Activated CD4-positive, alpha-beta T cell treated with anti-CD3 and anti-CD28 coated beads for 36 hours (primary cell): ENCODE measurements at regions of chr5 and their contacts with region 1.

Region 1: GRCh38 chr5:14727428-14727865 is 62.9 kb downstream of the OTULIN start:
- DNase-seq: peak; percentile 87
- ATAC-seq: peak; percentile 51
- H3K4me3 Mint-ChIP-seq: no peak overlapping the region
- H3K27ac Mint-ChIP-seq: no peak overlapping the region
- H3K4me1 Mint-ChIP-seq: peaks cover 15% of the 10 kb centered on the region
- H3K27me3 Mint-ChIP-seq: no peaks in the 10 kb centered on the region

Region 2: DNA sequence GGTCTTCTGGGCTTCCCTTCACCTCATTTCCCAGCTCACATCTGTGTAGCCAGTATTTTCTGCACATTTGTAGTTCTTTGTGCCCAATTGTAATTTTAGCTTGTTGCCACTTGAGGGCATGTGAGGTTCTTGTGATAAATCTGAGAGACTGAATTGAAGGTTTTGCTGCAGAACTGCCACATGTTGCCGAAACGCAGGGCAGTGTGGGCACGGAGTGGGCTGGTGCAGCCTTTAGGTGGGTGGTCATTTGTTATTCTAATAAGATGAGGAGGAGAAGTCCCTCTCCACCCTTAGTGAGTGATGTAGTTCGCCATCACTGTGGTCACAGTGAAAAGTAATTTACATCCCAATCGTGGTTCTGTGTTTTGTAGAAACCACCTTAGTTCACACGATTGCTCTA is 41.7 kb before region 1 on chr5:
- CTCF ChIA-PET with region 1: interaction called, 12 read pairs
- POLR2A ChIA-PET with region 1: no interaction called
- intact Hi-C with region 1: no loop called
- DNase-seq: peak; percentile 64
- ATAC-seq: peak; percentile 87
- H3K4me3 Mint-ChIP-seq: no peak overlapping the region
- H3K27ac Mint-ChIP-seq: no peak overlapping the region
- H3K4me1 Mint-ChIP-seq: peaks cover 10% of the 10 kb centered on the region
- H3K27me3 Mint-ChIP-seq: no peaks in the 10 kb centered on the region

Region 3: DNA sequence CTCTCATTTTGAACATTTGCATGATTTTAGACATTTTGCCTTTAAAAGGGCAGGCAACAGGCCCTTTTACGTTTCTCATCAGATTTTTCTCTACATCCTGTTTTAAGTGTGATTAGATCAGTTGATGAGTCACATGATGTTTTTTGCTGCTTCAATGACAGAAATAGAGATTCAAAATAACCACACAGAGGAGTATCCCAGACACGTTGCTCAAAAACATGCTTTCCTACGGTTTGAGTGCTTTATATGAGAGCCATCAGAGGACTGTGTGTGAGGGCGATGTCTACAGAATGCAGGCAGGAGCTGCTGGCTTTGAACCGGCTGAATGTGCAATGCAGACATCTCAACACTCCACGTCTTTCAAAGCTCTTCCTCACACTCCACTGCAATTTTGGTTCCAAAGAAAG is 20.8 kb before region 1 on chr5:
- CTCF ChIA-PET with region 1: interaction called, 10 read pairs
- POLR2A ChIA-PET with region 1: no interaction called
- intact Hi-C with region 1: loop called in 1 of 2 experiments (anchors 1 kb)
- DNase-seq: peak; percentile 51
- ATAC-seq: peak; percentile 95
- H3K4me3 Mint-ChIP-seq: peak overlapping the region; percentile 48
- H3K27ac Mint-ChIP-seq: peak overlapping the region; percentile 98
- H3K4me1 Mint-ChIP-seq: peaks cover 83% of the 10 kb centered on the region
- H3K27me3 Mint-ChIP-seq: no peaks in the 10 kb centered on the region

Region 4: DNA sequence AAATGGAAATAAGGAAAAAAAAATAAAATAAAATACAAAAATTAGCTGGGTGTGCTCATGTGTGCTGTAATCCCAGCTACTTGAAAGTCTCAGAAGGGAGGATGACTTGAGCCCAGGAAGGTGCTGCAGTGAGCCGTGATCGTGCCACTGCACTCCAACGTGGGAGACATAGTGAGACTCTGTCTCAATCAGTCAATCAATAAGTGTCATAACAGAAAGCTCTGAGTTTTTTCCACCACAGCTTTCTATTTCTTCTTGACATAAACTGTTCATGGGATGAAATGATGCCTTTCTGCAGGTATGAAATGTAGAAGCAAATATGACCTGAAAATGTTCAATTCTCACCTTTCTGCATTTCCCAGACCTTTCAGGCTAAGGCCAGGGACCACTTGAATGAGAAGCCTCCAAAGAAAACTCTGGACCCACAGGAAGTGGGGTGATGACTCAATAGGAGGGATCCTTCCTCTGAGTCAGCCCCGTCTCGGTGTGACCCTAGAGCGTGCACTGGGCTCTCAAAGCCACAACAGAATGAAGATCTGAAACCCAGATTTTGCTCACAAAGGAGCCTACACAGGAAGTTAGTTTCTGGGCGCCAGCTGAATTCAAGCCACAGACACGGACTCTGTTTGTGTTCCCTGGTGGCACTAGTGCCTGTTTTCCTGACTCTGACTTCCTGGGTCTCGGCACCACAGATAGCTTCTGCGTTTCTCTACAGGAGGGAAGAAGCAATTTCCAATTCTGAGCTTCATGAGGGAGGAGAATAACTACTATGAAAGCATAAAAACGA is 82.1 kb after region 1 on chr5:
- CTCF ChIA-PET with region 1: interaction called, 5 read pairs
- POLR2A ChIA-PET with region 1: no interaction called
- intact Hi-C with region 1: loop called (anchors 1 to 5 kb)
- DNase-seq: peak; percentile 87
- ATAC-seq: peak; percentile 96
- H3K4me3 Mint-ChIP-seq: peak overlapping the region; percentile 55
- H3K27ac Mint-ChIP-seq: peak overlapping the region; percentile 71
- H3K4me1 Mint-ChIP-seq: peaks cover 51% of the 10 kb centered on the region
- H3K27me3 Mint-ChIP-seq: no peaks in the 10 kb centered on the region

Region 5: DNA sequence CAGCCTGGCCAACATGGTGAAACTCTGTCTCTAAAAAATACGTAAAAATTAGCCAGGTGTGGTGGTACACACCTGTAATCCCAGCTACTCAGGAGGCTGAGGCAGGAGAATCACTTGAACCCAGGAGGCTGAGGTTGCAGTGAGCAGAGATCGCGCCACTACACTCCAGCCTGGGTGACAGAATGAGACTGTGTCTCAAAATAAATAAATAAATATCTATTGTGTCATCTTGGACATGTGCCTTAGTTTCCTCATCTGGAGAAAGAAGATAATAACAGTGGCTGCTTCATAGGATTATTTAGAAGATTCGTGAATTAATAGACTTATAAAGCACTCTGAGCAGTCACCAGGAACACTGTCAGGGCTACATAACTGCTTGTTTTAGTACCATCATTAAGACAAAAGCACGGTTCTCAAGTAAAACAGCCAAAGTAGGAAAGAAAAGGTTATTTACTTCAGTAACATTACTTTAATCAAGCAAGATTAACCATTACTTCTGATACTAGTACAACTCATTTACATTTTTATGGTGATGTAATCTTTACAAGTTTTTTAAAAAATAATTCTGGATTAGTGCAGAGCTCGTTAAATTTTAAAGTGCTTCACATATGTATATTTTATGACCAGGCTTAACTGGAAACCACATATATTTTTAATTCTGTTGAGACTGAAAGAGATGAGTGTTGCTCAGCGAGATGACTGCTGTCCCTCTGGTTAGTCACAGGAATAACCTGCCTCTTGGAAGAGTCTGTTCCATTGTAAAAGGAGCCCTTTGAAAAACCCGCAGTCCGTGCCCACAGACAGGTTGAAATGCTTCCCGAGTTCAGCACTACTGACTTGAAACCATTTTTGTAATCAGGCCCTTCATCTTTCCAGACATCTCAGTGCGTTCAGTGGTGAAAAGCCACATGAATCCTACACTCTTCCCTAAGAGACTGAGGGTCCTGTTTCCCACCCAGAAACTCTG is 107.4 kb after region 1 on chr5:
- CTCF ChIA-PET with region 1: no interaction called
- POLR2A ChIA-PET with region 1: no interaction called
- intact Hi-C with region 1: no loop called
- DNase-seq: no peak
- ATAC-seq: no peak
- H3K4me3 Mint-ChIP-seq: no peak overlapping the region
- H3K27ac Mint-ChIP-seq: no peak overlapping the region
- H3K4me1 Mint-ChIP-seq: peaks cover 20% of the 10 kb centered on the region
- H3K27me3 Mint-ChIP-seq: no peaks in the 10 kb centered on the region

Region 6: GRCh38 chr5:14946815-14947640 is 219.6 kb after region 1 on chr5:
- CTCF ChIA-PET with region 1: no interaction called
- POLR2A ChIA-PET with region 1: no interaction called
- intact Hi-C with region 1: loop called in 1 of 2 experiments (anchors 5 kb)
- DNase-seq: peak; percentile 40
- ATAC-seq: peak; percentile 95
- H3K4me3 Mint-ChIP-seq: no peak overlapping the region
- H3K27ac Mint-ChIP-seq: no peak overlapping the region
- H3K4me1 Mint-ChIP-seq: peaks cover 19% of the 10 kb centered on the region
- H3K27me3 Mint-ChIP-seq: no peaks in the 10 kb centered on the region

Region 7: DNA sequence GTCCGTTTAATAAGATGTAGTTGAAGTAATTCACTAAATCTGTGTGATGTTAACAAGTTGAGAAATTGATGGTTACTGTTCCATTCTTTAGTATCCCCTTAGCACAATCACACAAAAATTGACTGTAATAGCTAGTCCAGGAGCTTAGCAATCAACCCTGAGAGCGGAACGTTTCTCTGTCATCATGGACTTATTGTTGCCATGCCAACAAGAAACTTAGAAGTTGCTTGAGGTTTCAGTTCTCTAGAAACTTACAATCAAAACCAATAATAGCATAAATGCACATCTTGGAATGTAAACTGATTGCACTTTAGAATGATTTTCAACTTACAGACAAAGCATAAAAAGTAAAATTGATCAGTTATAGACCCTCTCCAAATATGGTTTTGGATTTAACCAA is 269.6 kb after region 1 on chr5:
- CTCF ChIA-PET with region 1: interaction called, 85 read pairs
- POLR2A ChIA-PET with region 1: no interaction called
- intact Hi-C with region 1: no loop called
- DNase-seq: no peak
- ATAC-seq: no peak
- H3K4me3 Mint-ChIP-seq: no peak overlapping the region
- H3K27ac Mint-ChIP-seq: no peak overlapping the region
- H3K4me1 Mint-ChIP-seq: peaks cover 20% of the 10 kb centered on the region
- H3K27me3 Mint-ChIP-seq: no peaks in the 10 kb centered on the region

Region 8: GRCh38 chr5:15013654-15014463 is 286.4 kb after region 1 on chr5:
- CTCF ChIA-PET with region 1: interaction called, 31 read pairs
- POLR2A ChIA-PET with region 1: no interaction called
- intact Hi-C with region 1: loop called (anchors 1 kb)
- DNase-seq: no peak
- ATAC-seq: no peak
- H3K4me3 Mint-ChIP-seq: no peak overlapping the region
- H3K27ac Mint-ChIP-seq: no peak overlapping the region
- H3K4me1 Mint-ChIP-seq: no peaks in the 10 kb centered on the region
- H3K27me3 Mint-ChIP-seq: no peaks in the 10 kb centered on the region